ENCODE measurements at regions of chr3 and their contacts with region 1.

Region 1: GRCh38 chr3:112582244-112582874 is 20.5 kb downstream of the SLC35A5 start:
- DNase-seq: peak; percentile 68
- H3K4me3 ChIP-seq: no peak overlapping the region
- H3K27ac ChIP-seq: no peak overlapping the region
- H3K4me1 ChIP-seq: no peaks in the 10 kb centered on the region
- H3K27me3 ChIP-seq: no peaks in the 10 kb centered on the region
- CTCF ChIP-seq: peak; percentile 74

Region 2: DNA sequence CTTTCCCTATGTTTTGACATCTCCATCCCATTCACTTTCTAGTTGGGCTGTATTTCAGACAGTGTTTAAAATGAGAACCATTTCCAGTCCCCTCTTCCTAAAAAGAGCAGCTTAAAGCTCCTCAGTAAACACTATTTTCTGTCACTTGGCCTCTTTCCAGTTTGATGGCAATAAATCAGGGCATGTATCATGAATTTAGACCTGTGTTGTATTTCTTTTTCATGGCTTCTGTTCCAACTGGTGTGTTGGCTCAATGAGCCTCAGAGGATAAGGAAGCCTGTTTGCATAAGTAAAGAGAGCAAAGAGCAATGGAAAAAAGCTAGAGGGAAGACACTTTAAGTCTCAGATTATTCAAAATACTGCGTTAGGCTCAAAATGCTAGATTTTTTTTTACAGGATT is 51.4 kb after region 1 on chr3:
- CTCF ChIA-PET with region 1: no interaction called
- POLR2A ChIA-PET with region 1: no interaction called
- intact Hi-C with region 1: loop called (anchors 5 kb)
- DNase-seq: peak; percentile 94
- H3K4me3 ChIP-seq: peak overlapping the region; percentile 23
- H3K27ac ChIP-seq: peak overlapping the region; percentile 62
- H3K4me1 ChIP-seq: peaks cover 67% of the 10 kb centered on the region
- H3K27me3 ChIP-seq: no peaks in the 10 kb centered on the region
- CTCF ChIP-seq: no peak

Region 3: DNA sequence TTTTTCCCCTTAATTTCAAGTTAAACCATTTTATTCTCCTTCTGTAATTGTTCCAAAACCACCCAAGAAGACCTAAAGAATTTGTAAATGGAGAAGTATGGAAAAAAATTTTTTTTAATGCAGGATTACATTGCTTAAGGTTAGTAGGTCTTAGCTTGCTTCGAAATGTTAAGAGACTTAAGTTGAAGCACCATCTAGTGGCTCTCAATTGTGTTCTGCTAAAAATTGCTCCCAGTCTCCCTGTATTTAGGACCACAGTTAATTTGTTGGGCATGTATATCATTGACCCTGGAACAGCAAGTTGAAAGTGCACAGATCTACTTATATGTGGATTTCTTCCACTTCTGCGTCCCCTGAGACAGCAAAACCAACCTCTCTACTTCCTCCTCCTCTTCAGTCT is 231.9 kb after region 1 on chr3:
- CTCF ChIA-PET with region 1: no interaction called
- POLR2A ChIA-PET with region 1: no interaction called
- intact Hi-C with region 1: loop called (anchors 5 kb)
- DNase-seq: peak; percentile 33
- H3K4me3 ChIP-seq: no peak overlapping the region
- H3K27ac ChIP-seq: no peak overlapping the region
- H3K4me1 ChIP-seq: no peaks in the 10 kb centered on the region
- H3K27me3 ChIP-seq: no peaks in the 10 kb centered on the region
- CTCF ChIP-seq: peak; percentile 48

Region 4: GRCh38 chr3:112979240-112979832 is 397.0 kb after region 1 on chr3:
- CTCF ChIA-PET with region 1: no interaction called
- POLR2A ChIA-PET with region 1: no interaction called
- intact Hi-C with region 1: loop called (anchors 2 kb)
- DNase-seq: peak; percentile 46
- H3K4me3 ChIP-seq: no peak overlapping the region
- H3K27ac ChIP-seq: no peak overlapping the region
- H3K4me1 ChIP-seq: no peaks in the 10 kb centered on the region
- H3K27me3 ChIP-seq: no peaks in the 10 kb centered on the region
- CTCF ChIP-seq: peak; percentile 72

Region 5: DNA sequence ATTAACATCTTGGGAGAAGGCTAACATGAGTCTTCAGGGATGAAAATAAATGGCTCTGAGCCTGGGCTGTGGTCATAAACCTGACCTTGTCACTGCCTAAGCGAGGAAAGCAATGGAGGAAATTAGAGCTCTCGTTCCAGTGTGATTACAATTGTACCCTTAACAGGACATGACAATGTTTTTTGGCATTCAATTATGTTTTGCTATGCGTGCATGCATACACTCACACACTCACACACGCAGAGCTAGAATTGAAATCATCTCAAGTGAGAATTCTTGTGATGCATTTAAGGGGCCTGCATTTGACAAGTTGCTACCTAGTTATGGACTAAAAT is 1630.9 kb after region 1 on chr3:
- CTCF ChIA-PET with region 1: no interaction called
- POLR2A ChIA-PET with region 1: no interaction called
- intact Hi-C with region 1: no loop called
- DNase-seq: no peak
- H3K4me3 ChIP-seq: peak overlapping the region; percentile 36
- H3K27ac ChIP-seq: no peak overlapping the region
- H3K4me1 ChIP-seq: peaks cover 11% of the 10 kb centered on the region
- H3K27me3 ChIP-seq: no peaks in the 10 kb centered on the region
- CTCF ChIP-seq: no peak

Measured in A673 (cell line).